ENCODE measurements at regions of chr2 and their contacts with region 1.

Region 1: DNA sequence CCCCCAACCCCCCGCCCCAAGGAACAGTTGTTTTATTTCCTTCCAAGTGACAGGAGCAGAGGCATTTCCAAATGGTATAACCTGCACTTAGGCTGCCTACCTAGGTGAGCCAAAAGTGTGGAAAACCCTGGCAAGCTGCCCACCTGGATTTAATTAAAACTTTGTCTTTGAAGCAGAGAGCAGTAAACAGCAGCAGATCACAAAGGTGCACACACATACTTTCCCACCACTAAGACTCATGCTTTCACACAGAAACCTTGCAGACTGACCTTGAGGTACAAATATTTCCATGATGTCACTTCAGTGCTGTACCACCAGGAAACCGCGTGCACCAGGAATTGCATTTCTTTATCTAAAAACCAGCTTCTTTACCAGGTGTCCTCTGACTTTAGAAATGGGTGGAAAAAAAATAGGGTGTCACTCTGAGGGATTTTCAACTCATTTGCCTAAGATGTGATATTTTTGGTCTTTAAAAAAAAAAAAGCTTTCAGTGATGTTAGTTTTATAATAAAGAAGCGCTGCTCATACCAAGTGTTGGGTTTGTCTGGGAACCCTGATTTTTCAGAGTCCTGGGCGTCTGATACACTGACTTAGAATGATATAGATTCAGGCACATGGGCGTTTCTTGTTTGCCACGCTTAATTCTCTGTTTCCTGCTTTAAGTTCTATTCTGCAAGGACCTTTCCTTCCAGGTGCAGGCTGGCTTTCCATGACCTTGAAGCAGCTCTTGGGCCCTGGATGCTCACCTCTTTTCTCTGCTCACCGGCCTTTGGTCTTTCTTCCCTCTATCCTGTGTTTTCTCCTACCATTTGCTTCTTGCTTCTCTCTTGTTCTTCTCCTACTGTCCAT is 70.7 kb upstream of the BCL2L11 start:
- DNase-seq: no peak
- H3K4me3 Mint-ChIP-seq: peak overlapping the region; percentile 22
- H3K27ac Mint-ChIP-seq: peak overlapping the region; percentile 39
- H3K4me1 Mint-ChIP-seq: peaks cover 47% of the 10 kb centered on the region
- H3K27me3 Mint-ChIP-seq: peaks cover 15% of the 10 kb centered on the region

Region 2: GRCh38 chr2:110812726-110813645 is 237.0 kb before region 1 on chr2:
- intact Hi-C with region 1: loop called (anchors 5 kb)
- DNase-seq: no peak
- H3K4me3 Mint-ChIP-seq: no peak overlapping the region
- H3K27ac Mint-ChIP-seq: no peak overlapping the region
- H3K4me1 Mint-ChIP-seq: peaks cover 24% of the 10 kb centered on the region
- H3K27me3 Mint-ChIP-seq: peaks cover 14% of the 10 kb centered on the region

Region 3: DNA sequence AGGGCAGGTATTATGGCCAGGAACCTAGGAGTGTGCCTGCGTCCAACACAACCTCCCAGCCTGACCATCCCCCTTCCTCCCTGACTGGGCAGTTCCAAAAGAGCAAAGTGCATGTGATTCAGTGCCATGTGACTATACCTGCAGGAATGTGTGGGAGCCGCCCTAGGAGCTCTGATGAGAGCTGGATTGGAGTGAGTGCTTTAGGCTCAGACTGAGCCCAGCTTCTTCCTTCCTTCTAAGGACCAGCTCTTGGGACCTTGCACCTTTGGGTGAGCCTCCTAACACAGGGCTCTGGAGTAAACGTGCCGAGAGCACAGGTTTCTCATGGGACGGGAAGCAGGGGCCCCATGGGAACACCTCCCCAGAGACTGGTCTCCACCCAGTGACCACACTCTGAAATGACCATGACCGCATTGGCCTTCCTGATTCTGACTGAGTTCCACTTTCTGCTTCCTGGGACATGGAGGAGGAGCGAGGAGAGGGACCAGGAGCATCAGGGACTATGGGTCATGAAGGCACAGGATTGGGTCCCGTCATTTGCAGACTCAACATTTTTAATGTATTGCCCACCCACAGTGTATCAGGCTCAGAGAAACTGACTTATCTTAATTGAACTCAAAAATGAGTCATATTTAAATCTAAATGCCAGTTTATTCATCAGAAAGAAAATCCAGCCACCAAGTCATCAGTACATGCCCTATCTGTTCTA is 17.1 kb before region 1 on chr2:
- intact Hi-C with region 1: loop called (anchors 1 kb)
- DNase-seq: no peak
- H3K4me3 Mint-ChIP-seq: no peak overlapping the region
- H3K27ac Mint-ChIP-seq: no peak overlapping the region
- H3K4me1 Mint-ChIP-seq: peaks cover 46% of the 10 kb centered on the region
- H3K27me3 Mint-ChIP-seq: peaks cover 38% of the 10 kb centered on the region